Endothelial cell of umbilical vein (primary cell): ENCODE measurements at regions of chr19 and their contacts with region 1.

Region 1: DNA sequence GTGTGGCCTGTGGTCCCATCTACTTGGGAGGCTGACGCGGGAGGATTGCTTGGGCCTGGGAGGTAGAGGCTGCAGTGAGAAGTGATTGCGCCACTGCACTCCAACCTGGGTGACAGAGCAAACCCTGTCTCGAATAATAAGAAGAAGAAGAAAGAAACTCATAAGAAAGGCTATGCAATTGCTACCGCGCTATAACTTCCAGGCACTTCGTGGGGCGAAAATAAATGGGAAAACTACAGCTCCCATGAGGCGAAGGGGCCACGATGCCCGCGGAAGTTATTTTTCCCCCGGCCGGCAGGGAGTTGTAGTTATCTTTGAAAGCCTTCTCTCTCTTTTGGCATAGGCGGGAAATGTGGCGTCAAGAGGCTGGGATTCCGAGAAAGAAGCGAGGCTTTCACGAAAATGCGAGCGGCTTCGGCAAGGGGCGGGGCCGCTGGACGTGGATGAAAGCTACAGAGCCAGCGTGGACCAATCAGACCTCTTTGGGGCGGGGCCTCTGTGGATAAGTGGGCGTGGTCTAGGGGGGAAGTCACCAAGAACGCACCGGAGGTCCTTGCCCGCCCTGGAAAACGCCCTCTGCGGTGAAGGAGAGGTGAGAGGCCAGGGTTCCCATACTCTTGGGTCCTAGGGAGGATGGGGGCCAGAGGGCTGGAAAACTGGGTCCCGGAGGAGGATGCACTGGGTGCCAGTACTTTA is at the start of gene NUCB1:
- DNase-seq: peak; percentile 99
- H3K4me3 ChIP-seq: peak within 1 kb of the TSS; percentile 62 to 84 (median 67)
- H3K27ac ChIP-seq: peak within 1 kb of the TSS; percentile 49
- H3K4me1 ChIP-seq: peaks cover 12% of the 10 kb centered on the region
- H3K27me3 ChIP-seq: peaks cover 2 to 7% of the 10 kb centered on the region in 2 experiments
- CTCF ChIP-seq: peak in 1 of 2 donors; percentile 33
- POLR2A ChIP-seq: peak; percentile 30
- total RNA-seq, gene NUCB1: 190 and 194 TPM in 2 replicates

Region 2: GRCh38 chr19:48926909-48927308 is 27.0 kb after region 1 on chr19:
- CTCF ChIA-PET with region 1: interaction called, 8 read pairs
- POLR2A ChIA-PET with region 1: interaction called, 10 read pairs
- dilution Hi-C with region 1: no loop called
- intact Hi-C with region 1: no loop called
- DNase-seq: peak; percentile 82
- H3K4me3 ChIP-seq: no peak overlapping the region
- H3K27ac ChIP-seq: no peak overlapping the region
- H3K4me1 ChIP-seq: peaks cover 2% of the 10 kb centered on the region
- H3K27me3 ChIP-seq: peaks cover 0 to under 1% of the 10 kb centered on the region in 2 experiments
- CTCF ChIP-seq: no peak
- POLR2A ChIP-seq: no peak

Region 3: GRCh38 chr19:48954595-48955310 is 54.8 kb after region 1 on chr19 and contains the start of gene BAX:
- CTCF ChIA-PET with region 1: interaction called, 5 read pairs
- POLR2A ChIA-PET with region 1: interaction called, 4 read pairs
- dilution Hi-C with region 1: no loop called
- intact Hi-C with region 1: loop called (anchors 2 kb)
- DNase-seq: peak; percentile 98
- H3K4me3 ChIP-seq: peak within 1 kb of the TSS; percentile 53 to 99 (median 66)
- H3K27ac ChIP-seq: peak within 1 kb of the TSS; percentile 84
- H3K4me1 ChIP-seq: peaks cover 18% of the 10 kb centered on the region
- H3K27me3 ChIP-seq: no peaks in the 10 kb centered on the region
- CTCF ChIP-seq: no peak
- POLR2A ChIP-seq: peak; percentile 97
- total RNA-seq, gene BAX: 267 and 295 TPM in 2 replicates